ENCODE measurements at regions of chr1 and their contacts with region 1.

Region 1: GRCh38 chr1:85109475-85109874 is 61.2 kb upstream of the MCOLN3 start:
- DNase-seq: peak; percentile 64
- CTCF ChIP-seq: peak; percentile 69

Region 2: GRCh38 chr1:85128341-85128740 is 18.9 kb after region 1 on chr1:
- CTCF ChIA-PET with region 1: interaction called, 10 read pairs
- POLR2A ChIA-PET with region 1: no interaction called
- DNase-seq: no peak
- CTCF ChIP-seq: no peak

Region 3: GRCh38 chr1:85230305-85230980 is 121.0 kb after region 1 on chr1:
- CTCF ChIA-PET with region 1: interaction called, 13 read pairs
- POLR2A ChIA-PET with region 1: no interaction called
- DNase-seq: no peak
- CTCF ChIP-seq: no peak

Region 4: GRCh38 chr1:85240174-85240601 is 130.7 kb after region 1 on chr1:
- CTCF ChIA-PET with region 1: interaction called, 14 read pairs
- POLR2A ChIA-PET with region 1: no interaction called
- DNase-seq: peak; percentile 24
- CTCF ChIP-seq: peak; percentile 31